CD8-positive, alpha-beta T cell (primary cell): ENCODE measurements at regions of chr22 and their contacts with region 1.

Region 1: DNA sequence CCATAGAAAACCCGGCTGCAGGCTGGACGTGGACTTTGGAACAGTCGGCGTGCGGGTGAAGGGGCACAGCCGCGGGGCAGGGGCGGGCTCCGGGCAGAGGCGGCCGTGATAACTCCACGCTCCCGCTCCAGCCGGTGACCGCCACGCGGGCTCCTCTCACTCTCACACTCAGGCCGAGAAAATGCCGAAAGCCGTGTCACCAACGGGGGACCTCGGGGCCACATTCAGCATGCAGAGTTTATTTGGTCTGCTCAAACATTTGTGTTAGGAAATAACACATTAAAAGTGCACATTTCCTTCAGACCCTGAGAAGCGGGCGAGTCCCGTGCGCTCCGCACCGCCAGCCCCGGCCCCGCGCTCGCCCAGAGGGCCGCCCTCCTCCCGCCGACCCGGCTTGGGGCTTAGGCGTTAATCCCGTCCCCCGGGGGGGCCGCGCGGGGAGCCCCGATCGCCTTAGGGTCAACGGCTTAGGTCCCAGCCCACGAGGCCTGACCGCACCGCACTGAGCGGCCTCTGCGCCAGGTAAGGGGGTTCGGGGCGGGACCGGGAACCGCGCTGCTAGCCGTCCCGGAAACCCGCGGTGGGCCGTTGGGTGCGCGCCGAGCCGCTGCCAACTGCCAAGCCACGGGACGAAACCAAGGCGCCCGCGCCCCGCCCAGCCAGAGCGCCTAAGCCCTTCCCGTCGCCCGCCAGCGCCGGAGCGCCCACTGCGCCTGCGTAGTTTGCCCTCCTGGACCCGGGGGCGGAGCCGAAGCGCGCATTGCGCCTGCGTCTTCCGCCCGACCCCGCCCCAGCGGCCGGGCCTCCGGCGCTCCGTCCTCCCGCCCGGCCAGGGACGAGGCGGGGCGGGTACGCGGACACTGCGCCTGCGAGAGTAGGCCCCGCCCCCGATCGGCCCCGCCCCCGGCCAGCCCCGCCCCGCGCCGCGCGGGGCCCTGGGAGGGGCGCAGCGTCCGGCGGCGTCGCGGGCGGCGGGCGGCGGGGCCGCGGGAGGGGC is at the start of gene ZBED4:
- DNase-seq: peak; percentile 94 to 100 (median 99)
- ATAC-seq: peak; percentile 86
- H3K4me3 ChIP-seq: peak within 1 kb of the TSS; percentile 53 to 80
- H3K4me3 Mint-ChIP-seq: peak within 1 kb of the TSS; percentile 94
- H3K27ac ChIP-seq: peak within 1 kb of the TSS; percentile 55 to 60
- H3K27ac Mint-ChIP-seq: peak within 1 kb of the TSS; percentile 93
- H3K4me1 ChIP-seq: peaks cover 45% of the 10 kb centered on the region
- H3K4me1 Mint-ChIP-seq: peaks cover 50% of the 10 kb centered on the region
- H3K27me3 ChIP-seq: peaks cover 0 to 12% of the 10 kb centered on the region in 2 experiments
- H3K27me3 Mint-ChIP-seq: no peaks in the 10 kb centered on the region
- CTCF ChIP-seq: no peak
- total RNA-seq, gene ZBED4: 16.2 to 16.6 TPM

Region 2: DNA sequence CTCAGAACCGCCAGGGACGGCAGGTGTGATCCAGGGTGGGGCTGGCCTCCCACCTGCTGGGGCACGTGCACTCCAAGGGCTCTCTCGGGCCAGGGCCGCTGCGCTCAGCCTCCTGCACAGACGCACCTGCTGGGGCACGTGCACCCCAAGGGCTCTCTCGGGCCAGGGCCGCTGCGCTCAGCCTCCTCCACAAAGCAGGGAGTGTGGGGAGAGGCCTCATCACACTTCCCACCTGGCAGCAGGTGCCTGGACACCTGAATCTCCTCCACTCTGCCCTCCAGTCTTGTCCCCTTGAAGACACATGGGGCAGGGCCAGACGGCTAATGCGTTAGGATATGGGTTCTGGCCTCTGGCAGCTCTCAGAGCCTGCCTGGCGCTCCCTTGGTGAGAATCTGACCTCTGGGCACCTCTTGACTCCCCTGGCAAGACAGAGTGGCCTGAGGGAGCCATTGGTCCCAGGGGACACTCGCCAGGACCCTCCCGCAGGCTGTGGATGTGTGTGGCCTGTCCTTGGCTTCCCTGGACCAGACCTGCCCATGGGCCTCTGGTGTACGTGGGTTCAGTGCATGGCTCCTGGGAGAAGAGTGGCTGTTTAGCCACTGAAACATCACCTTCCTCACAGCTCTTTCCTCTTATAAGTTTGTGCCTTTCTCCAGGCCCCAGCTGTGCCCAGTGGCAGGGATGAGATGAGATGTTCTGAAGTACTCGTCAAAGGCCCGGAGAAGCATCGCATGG is 99.1 kb before region 1 on chr22:
- CTCF ChIA-PET with region 1: no interaction called
- POLR2A ChIA-PET with region 1: no interaction called
- intact Hi-C with region 1: no loop called
- DNase-seq: peak in 1 of 9 experiments; percentile 44
- ATAC-seq: no peak
- H3K4me3 ChIP-seq: no peak overlapping the region
- H3K4me3 Mint-ChIP-seq: no peak overlapping the region
- H3K27ac ChIP-seq: no peak overlapping the region
- H3K27ac Mint-ChIP-seq: no peak overlapping the region
- H3K4me1 ChIP-seq: no peaks in the 10 kb centered on the region
- H3K4me1 Mint-ChIP-seq: no peaks in the 10 kb centered on the region
- H3K27me3 ChIP-seq: peaks cover 0 to 2% of the 10 kb centered on the region in 2 experiments
- H3K27me3 Mint-ChIP-seq: no peaks in the 10 kb centered on the region
- CTCF ChIP-seq: no peak

Region 3: DNA sequence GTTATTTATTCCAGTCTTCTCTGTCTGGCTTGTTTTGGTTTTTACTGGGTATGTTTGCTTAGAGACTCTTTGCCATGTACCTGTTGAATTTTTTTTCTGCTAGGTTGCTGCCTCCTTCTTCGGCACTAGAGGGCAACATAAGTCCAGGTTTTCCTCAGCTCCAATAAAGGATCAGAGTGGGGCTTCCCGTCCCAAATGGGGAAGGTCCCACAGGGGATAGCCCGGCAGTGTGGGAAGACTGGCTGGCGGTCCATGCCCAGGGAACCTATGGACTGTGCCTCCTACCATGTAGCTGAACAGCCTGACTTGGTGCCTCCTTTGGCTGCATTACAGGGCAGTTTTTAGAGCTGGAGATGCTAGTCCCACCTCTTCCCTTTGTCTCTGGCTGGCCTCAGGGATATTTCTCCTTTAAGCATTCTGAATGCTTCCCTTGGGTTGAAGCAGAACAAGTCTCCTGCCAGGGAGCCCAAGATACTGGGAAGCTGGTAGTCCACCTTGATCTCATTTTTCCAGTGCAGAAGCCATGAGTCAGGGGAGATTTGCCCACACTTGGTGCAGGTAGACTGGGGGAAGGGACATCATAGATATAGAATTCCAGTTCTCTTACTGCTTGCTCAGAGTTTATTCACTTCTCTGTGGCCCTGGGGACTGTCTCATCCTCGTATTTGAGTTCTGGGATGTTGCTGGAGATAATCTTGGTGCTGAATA is 85.7 kb before region 1 on chr22:
- CTCF ChIA-PET with region 1: no interaction called
- POLR2A ChIA-PET with region 1: no interaction called
- intact Hi-C with region 1: loop called in 1 of 2 experiments (anchors 1 kb)
- DNase-seq: peak in 3 of 9 experiments; percentile 62 to 71 (median 64)
- ATAC-seq: peak; percentile 24
- H3K4me3 ChIP-seq: no peak overlapping the region
- H3K4me3 Mint-ChIP-seq: no peak overlapping the region
- H3K27ac ChIP-seq: no peak overlapping the region
- H3K27ac Mint-ChIP-seq: peak overlapping the region; percentile 19
- H3K4me1 ChIP-seq: peaks cover 3% of the 10 kb centered on the region
- H3K4me1 Mint-ChIP-seq: peaks cover 12% of the 10 kb centered on the region
- H3K27me3 ChIP-seq: no peaks in the 10 kb centered on the region
- H3K27me3 Mint-ChIP-seq: no peaks in the 10 kb centered on the region
- CTCF ChIP-seq: peak; percentile 71

Region 4: DNA sequence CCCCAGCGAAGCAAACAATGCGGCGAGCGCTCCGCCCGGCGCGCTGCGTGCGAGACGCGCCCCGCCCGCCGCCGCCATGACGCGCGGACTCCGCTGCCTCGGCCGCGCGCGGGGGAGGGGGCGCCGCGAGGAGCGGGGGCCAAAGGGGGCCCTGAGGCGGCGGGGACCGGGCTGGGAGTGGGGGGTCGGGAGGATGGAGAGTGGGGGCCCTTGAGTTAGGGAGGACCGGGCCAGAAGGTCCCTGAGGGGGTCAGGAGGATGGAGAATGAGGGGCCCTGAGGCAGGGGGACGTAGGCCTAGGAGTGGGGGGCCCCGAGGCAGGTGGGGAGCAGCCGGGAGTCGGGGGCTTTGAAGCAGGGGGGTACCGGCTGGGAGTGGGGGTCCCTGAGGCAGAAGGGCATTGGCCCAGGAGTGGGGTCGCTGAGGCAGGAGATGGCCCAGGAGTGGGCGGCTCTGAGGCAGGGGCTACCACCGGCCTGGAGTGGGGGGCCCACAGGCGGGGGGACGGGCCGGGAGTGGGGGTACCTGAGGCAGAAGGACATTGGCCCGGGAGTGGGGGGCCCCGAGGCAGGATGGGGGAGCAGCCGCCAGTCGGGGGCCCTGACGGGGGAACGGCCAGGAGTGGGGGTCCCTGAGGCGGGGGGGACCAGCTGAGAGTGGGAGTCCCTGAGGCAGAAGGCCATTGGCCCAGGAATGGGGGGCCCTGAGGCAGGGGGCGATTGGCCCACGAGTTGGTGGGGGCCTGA is 25.2 kb before region 1 on chr22 and contains the start of gene BRD1:
- CTCF ChIA-PET with region 1: no interaction called
- POLR2A ChIA-PET with region 1: interaction called, 13 read pairs
- intact Hi-C with region 1: loop called (anchors 1 kb)
- DNase-seq: peak in 8 of 9 experiments; percentile 42 to 84 (median 59)
- ATAC-seq: peak; percentile 52
- H3K4me3 ChIP-seq: peak within 1 kb of the TSS; percentile 62 to 71
- H3K4me3 Mint-ChIP-seq: peak within 1 kb of the TSS; percentile 96
- H3K27ac ChIP-seq: peak within 1 kb of the TSS; percentile 55 to 78
- H3K27ac Mint-ChIP-seq: peak within 1 kb of the TSS; percentile 97
- H3K4me1 ChIP-seq: peaks cover 38% of the 10 kb centered on the region
- H3K4me1 Mint-ChIP-seq: peaks cover 37% of the 10 kb centered on the region
- H3K27me3 ChIP-seq: no peaks in the 10 kb centered on the region
- H3K27me3 Mint-ChIP-seq: no peaks in the 10 kb centered on the region
- CTCF ChIP-seq: no peak
- total RNA-seq, gene BRD1: 159 to 167 TPM

Region 5: GRCh38 chr22:49867303-49868265 is 14.4 kb after region 1 on chr22:
- CTCF ChIA-PET with region 1: interaction called, 3 read pairs
- POLR2A ChIA-PET with region 1: interaction called, 13 read pairs
- intact Hi-C with region 1: loop called in 1 of 2 experiments (anchors 2 kb)
- DNase-seq: peak in 2 of 9 experiments; percentile 58 to 73
- ATAC-seq: peak; percentile 65
- H3K4me3 ChIP-seq: no peak overlapping the region
- H3K4me3 Mint-ChIP-seq: peak overlapping the region; percentile 65
- H3K27ac ChIP-seq: peak overlapping the region in 1 of 2 experiments; percentile 40
- H3K27ac Mint-ChIP-seq: peak overlapping the region; percentile 80
- H3K4me1 ChIP-seq: peaks cover 34% of the 10 kb centered on the region
- H3K4me1 Mint-ChIP-seq: peaks cover 68% of the 10 kb centered on the region
- H3K27me3 ChIP-seq: no peaks in the 10 kb centered on the region
- H3K27me3 Mint-ChIP-seq: no peaks in the 10 kb centered on the region
- CTCF ChIP-seq: no peak

Region 6: GRCh38 chr22:49894322-49895054 is 41.3 kb after region 1 on chr22:
- CTCF ChIA-PET with region 1: no interaction called
- POLR2A ChIA-PET with region 1: no interaction called
- intact Hi-C with region 1: no loop called
- DNase-seq: no peak
- ATAC-seq: no peak
- H3K4me3 ChIP-seq: no peak overlapping the region
- H3K4me3 Mint-ChIP-seq: no peak overlapping the region
- H3K27ac ChIP-seq: no peak overlapping the region
- H3K27ac Mint-ChIP-seq: peak overlapping the region; percentile 66
- H3K4me1 ChIP-seq: no peaks in the 10 kb centered on the region
- H3K4me1 Mint-ChIP-seq: peaks cover 8% of the 10 kb centered on the region
- H3K27me3 ChIP-seq: no peaks in the 10 kb centered on the region
- H3K27me3 Mint-ChIP-seq: no peaks in the 10 kb centered on the region
- CTCF ChIP-seq: no peak

Region 7: GRCh38 chr22:49936018-49936952 is 83.1 kb after region 1 on chr22:
- CTCF ChIA-PET with region 1: no interaction called
- POLR2A ChIA-PET with region 1: no interaction called
- intact Hi-C with region 1: no loop called
- DNase-seq: peak; percentile 80 to 96 (median 92)
- ATAC-seq: peak; percentile 79
- H3K4me3 ChIP-seq: peak overlapping the region; percentile 43 to 47
- H3K4me3 Mint-ChIP-seq: peak overlapping the region; percentile 67
- H3K27ac ChIP-seq: peak overlapping the region; percentile 56 to 82
- H3K27ac Mint-ChIP-seq: peak overlapping the region; percentile 85
- H3K4me1 ChIP-seq: peaks cover 26% of the 10 kb centered on the region
- H3K4me1 Mint-ChIP-seq: peaks cover 16% of the 10 kb centered on the region
- H3K27me3 ChIP-seq: no peaks in the 10 kb centered on the region
- H3K27me3 Mint-ChIP-seq: no peaks in the 10 kb centered on the region
- CTCF ChIP-seq: no peak

Region 8: DNA sequence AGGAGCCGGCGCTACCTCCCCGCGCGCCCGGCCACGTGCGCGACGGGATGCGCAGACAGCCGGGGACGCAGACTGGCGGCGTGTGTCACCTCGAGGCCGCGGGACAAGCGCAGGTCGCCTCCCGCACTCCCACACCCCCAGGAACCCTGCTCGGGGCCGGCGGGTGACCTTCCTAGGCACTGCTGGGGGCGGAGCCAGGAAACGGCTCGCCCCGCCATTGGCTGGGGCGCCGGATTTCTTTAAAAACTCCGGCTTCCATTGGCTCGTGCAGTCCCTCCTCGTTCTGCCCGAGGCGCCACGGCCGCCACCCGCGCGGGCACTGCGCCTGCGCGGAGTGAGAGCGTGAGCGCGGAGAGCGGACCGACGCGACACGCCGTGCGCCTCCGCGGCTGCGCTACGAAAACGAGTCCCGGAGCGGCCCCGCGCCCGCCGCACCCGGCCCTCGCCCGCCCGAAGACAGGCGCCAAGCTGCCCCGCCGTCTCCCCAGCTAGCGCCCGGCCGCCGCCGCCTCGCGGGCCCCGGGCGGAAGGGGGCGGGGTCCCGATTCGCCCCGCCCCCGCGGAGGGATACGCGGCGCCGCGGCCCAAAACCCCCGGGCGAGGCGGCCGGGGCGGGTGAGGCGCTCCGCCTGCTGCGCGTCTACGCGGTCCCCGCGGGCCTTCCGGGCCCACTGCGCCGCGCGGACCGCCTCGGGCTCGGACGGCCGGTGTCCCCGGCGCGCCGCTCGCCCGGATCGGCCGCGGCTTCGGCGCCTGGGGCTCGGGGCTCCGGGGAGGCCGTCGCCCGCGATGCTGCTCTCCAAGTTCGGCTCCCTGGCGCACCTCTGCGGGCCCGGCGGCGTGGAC is 107.2 kb after region 1 on chr22 and contains the start of gene PIM3:
- CTCF ChIA-PET with region 1: no interaction called
- POLR2A ChIA-PET with region 1: interaction called, 3 read pairs
- intact Hi-C with region 1: loop called (anchors 1 to 5 kb)
- DNase-seq: peak; percentile 80 to 96 (median 90)
- ATAC-seq: peak; percentile 61
- H3K4me3 ChIP-seq: peak within 1 kb of the TSS; percentile 67 to 86
- H3K4me3 Mint-ChIP-seq: peak within 1 kb of the TSS; percentile 93
- H3K27ac ChIP-seq: peak within 1 kb of the TSS; percentile 71 to 80
- H3K27ac Mint-ChIP-seq: peak within 1 kb of the TSS; percentile 95
- H3K4me1 ChIP-seq: peaks cover 33% of the 10 kb centered on the region
- H3K4me1 Mint-ChIP-seq: peaks cover 17% of the 10 kb centered on the region
- H3K27me3 ChIP-seq: no peaks in the 10 kb centered on the region
- H3K27me3 Mint-ChIP-seq: no peaks in the 10 kb centered on the region
- CTCF ChIP-seq: no peak
- total RNA-seq, gene PIM3: 316 to 328 TPM